SK-N-SH (cell line): ENCODE measurements at regions of chr11 and their contacts with region 1.

Region 1: GRCh38 chr11:13335319-13335718 is 57.7 kb downstream of the BMAL1 start:
- DNase-seq: peak; percentile 69
- H3K4me3 ChIP-seq: no peak overlapping the region; a peak in 1 of 4 replicates
- H3K27ac ChIP-seq: no peak overlapping the region
- H3K4me1 ChIP-seq: peaks cover 16 to 47% of the 10 kb centered on the region in 2 experiments
- H3K27me3 ChIP-seq: no peaks in the 10 kb centered on the region
- CTCF ChIP-seq: peak; percentile 91
- EP300 ChIP-seq: no peak
- RAD21 ChIP-seq: peak; percentile 90

Region 2: DNA sequence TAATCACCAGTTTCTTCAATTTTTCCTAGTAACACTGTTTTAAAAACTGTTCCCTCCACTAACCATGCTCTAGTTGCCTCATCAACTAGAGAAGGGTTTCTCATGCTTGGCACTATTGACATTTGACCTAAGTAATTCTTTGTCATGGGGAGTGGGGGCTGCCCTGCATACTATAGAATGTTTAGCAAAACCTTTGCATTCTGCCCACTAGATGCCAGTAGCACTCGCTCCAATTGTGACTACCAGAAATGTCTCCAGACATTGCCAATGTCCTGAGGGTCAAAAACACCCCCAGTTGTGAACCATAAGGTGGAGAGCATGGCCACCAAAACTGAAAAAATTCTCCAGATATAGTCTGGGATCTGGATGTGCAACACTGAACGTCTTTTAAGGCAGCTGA is 85.3 kb before region 1 on chr11:
- CTCF ChIA-PET with region 1: interaction called, 17 read pairs
- POLR2A ChIA-PET with region 1: no interaction called
- DNase-seq: no peak
- H3K4me3 ChIP-seq: no peak overlapping the region
- H3K27ac ChIP-seq: no peak overlapping the region
- H3K4me1 ChIP-seq: no peaks in the 10 kb centered on the region
- H3K27me3 ChIP-seq: no peaks in the 10 kb centered on the region
- CTCF ChIP-seq: peak; percentile 50
- EP300 ChIP-seq: no peak
- RAD21 ChIP-seq: peak; percentile 56

Region 3: GRCh38 chr11:13276832-13277767 is 58.2 kb before region 1 on chr11:
- CTCF ChIA-PET with region 1: interaction called, 36 read pairs
- POLR2A ChIA-PET with region 1: no interaction called
- DNase-seq: peak; percentile 99
- H3K4me3 ChIP-seq: peak overlapping the region; percentile 76 to 88
- H3K27ac ChIP-seq: peak overlapping the region; percentile 74 to 82
- H3K4me1 ChIP-seq: peaks cover 0 to 15% of the 10 kb centered on the region in 2 experiments; a peak in 2 of 4 replicates
- H3K27me3 ChIP-seq: no peaks in the 10 kb centered on the region
- CTCF ChIP-seq: no peak
- EP300 ChIP-seq: no peak
- RAD21 ChIP-seq: peak; percentile 17

Region 4: GRCh38 chr11:13297917-13298356 is 37.4 kb before region 1 on chr11:
- CTCF ChIA-PET with region 1: interaction called, 30 read pairs
- POLR2A ChIA-PET with region 1: no interaction called
- DNase-seq: no peak
- H3K4me3 ChIP-seq: no peak overlapping the region
- H3K27ac ChIP-seq: no peak overlapping the region; a peak in 1 of 4 replicates
- H3K4me1 ChIP-seq: peaks cover 0 to 35% of the 10 kb centered on the region in 2 experiments; a peak in 1 of 4 replicates
- H3K27me3 ChIP-seq: no peaks in the 10 kb centered on the region
- CTCF ChIP-seq: no peak
- EP300 ChIP-seq: no peak
- RAD21 ChIP-seq: no peak

Region 5: GRCh38 chr11:13324709-13325108 is 10.6 kb before region 1 on chr11:
- CTCF ChIA-PET with region 1: interaction called, 46 read pairs
- POLR2A ChIA-PET with region 1: no interaction called
- DNase-seq: peak; percentile 32
- H3K4me3 ChIP-seq: no peak overlapping the region
- H3K27ac ChIP-seq: peak overlapping the region in 1 of 2 experiments; percentile 18; a peak in 1 of 4 replicates
- H3K4me1 ChIP-seq: peaks cover 5 to 36% of the 10 kb centered on the region in 2 experiments
- H3K27me3 ChIP-seq: no peaks in the 10 kb centered on the region
- CTCF ChIP-seq: no peak
- EP300 ChIP-seq: no peak
- RAD21 ChIP-seq: peak; percentile 44